Activated CD8-positive, alpha-beta memory T cell treated with anti-CD3 and anti-CD28 coated beads, Interleukin-2, amount 10 ng/mL, durations not matched to agents 7 days and 5 days (primary cell): ENCODE measurements at regions of chr10 and their contacts with region 1.

Region 1: DNA sequence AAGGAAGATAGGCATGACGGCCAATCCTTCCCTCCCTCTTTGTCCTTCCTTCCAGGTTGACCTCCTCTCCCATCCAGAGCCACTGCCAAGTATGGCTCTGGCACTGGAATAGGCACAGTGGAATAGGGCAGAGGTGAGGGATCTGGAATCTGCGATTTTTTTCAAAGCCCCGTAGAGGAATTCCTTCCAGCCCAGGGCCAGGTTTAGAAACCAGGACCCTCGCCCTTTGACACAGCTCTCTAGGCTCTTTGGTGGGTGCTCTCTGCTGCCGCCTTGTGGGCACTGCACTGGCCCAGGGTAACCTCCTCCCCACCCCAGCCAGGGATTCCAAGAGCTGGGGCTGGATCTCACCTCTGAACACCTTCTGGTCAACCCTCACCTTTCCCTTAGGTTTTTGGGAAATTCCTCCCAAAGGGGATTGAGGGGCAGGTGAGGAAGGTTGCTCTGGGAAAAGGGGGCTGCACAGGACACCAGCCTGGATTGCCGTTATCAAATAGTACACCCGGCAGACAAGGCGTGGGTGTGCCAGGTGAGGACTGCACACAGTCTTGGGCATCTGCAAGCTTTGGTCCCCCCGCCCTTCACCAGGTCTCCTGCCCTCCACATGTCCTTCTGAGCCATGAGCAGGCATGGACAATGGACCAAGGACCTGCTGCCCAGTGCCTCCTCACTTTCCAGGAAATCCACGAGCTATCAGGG is 22.8 kb downstream of the C10orf105 start:
- DNase-seq: peak; percentile 75
- ATAC-seq: peak; percentile 66
- H3K4me3 Mint-ChIP-seq: no peak overlapping the region
- H3K27ac Mint-ChIP-seq: no peak overlapping the region
- H3K4me1 Mint-ChIP-seq: peaks cover 51% of the 10 kb centered on the region
- H3K27me3 Mint-ChIP-seq: peaks cover 8% of the 10 kb centered on the region

Region 2: DNA sequence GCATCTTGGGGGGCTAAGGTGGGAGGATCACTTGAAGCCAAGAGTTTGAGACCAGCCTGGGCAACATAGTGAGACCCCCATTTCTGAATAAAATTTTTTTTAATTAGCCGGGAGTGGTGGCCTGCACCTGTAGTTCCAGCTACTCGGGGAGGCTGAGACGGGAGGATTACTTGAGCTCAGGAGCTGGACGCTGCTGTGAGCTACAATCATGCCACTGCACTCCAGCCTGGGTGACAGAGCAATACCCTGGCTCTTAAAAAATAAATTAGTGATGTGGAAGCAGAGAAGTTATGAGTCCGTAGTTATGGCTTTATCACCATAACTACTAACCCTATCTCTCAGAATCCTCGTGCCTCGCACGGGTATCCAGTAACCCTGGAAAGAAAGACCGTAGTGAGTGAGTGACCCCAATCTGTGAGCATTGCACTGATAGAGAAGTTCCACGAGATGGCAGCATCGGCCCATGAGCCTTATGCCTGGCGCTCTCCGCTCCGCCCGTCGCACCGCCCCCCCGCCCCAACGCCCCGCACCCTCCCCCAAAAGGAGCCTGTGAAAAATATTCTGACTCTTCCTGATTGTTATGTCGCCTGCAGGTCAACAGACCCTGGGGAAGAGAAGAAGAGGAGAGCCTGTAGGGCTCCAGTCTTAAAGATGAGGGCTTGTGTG is 382.6 kb before region 1 on chr10:
- CTCF ChIA-PET with region 1: interaction called, 35 read pairs
- DNase-seq: peak; percentile 59
- ATAC-seq: peak; percentile 37
- H3K4me3 Mint-ChIP-seq: no peak overlapping the region
- H3K27ac Mint-ChIP-seq: no peak overlapping the region
- H3K4me1 Mint-ChIP-seq: peaks cover 19% of the 10 kb centered on the region
- H3K27me3 Mint-ChIP-seq: peaks cover 18% of the 10 kb centered on the region

Region 3: DNA sequence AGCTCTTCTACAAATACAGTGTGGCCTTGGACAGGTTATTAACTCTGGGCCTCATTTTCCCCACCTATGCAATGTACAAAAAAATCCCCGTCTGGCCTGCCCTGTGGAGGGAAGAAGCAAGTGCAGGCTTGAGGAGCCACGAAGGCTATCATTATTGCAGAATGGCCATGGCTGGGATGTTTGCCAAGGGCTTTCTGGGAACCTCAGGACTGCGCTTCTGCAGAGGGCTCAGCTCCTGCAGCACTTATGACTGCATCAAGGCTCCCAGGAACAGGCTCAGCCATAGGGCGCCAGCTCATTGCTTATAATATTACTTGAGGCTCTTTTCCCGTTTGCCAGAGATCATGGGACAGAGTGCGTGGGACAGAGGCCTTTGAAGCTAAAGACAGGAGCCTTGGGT is 43.3 kb after region 1 on chr10:
- CTCF ChIA-PET with region 1: interaction called, 13 read pairs
- DNase-seq: no peak
- ATAC-seq: no peak
- H3K4me3 Mint-ChIP-seq: no peak overlapping the region
- H3K27ac Mint-ChIP-seq: peak overlapping the region; percentile 4
- H3K4me1 Mint-ChIP-seq: peaks cover 79% of the 10 kb centered on the region
- H3K27me3 Mint-ChIP-seq: no peaks in the 10 kb centered on the region

Region 4: DNA sequence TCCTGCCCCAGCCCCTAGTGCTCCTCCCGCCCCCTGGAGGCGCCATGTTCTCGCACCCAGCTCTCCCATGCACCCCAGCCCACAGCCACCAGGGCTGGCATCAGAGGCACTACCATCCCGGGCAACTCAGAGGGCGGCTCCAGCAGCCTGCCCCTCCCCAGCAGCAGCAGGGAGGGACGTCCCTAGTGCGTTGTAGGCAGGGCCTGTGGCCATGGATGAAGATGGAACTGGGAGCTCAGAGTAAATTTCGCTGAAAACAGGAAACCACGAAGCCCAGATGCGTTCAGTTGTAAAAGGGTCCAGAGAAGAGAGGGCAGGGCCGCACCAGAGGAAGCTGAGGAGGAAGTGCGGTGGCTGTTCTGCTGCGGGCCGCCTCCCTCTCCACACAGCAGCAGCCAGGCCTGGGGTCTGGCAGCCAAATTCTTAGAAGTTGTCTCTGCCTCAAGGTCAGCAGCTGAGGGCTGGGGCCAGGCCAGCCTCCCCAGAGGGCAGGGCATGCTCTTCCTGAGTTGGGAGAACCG is 52.0 kb after region 1 on chr10:
- CTCF ChIA-PET with region 1: interaction called, 40 read pairs
- DNase-seq: peak; percentile 95
- ATAC-seq: peak; percentile 85
- H3K4me3 Mint-ChIP-seq: peak overlapping the region; percentile 56
- H3K27ac Mint-ChIP-seq: peak overlapping the region; percentile 97
- H3K4me1 Mint-ChIP-seq: peaks cover 94% of the 10 kb centered on the region
- H3K27me3 Mint-ChIP-seq: no peaks in the 10 kb centered on the region

Region 5: GRCh38 chr10:71756311-71757191 is 59.8 kb after region 1 on chr10:
- CTCF ChIA-PET with region 1: interaction called, 13 read pairs
- DNase-seq: no peak
- ATAC-seq: peak; percentile 52
- H3K4me3 Mint-ChIP-seq: peak overlapping the region; percentile 55
- H3K27ac Mint-ChIP-seq: peak overlapping the region; percentile 88
- H3K4me1 Mint-ChIP-seq: peaks cover 69% of the 10 kb centered on the region
- H3K27me3 Mint-ChIP-seq: no peaks in the 10 kb centered on the region

Region 6: GRCh38 chr10:71766702-71767419 is 70.1 kb after region 1 on chr10:
- CTCF ChIA-PET with region 1: interaction called, 149 read pairs
- DNase-seq: peak; percentile 70
- ATAC-seq: no peak
- H3K4me3 Mint-ChIP-seq: no peak overlapping the region
- H3K27ac Mint-ChIP-seq: peak overlapping the region; percentile 90
- H3K4me1 Mint-ChIP-seq: peaks cover 61% of the 10 kb centered on the region
- H3K27me3 Mint-ChIP-seq: no peaks in the 10 kb centered on the region

Region 7: DNA sequence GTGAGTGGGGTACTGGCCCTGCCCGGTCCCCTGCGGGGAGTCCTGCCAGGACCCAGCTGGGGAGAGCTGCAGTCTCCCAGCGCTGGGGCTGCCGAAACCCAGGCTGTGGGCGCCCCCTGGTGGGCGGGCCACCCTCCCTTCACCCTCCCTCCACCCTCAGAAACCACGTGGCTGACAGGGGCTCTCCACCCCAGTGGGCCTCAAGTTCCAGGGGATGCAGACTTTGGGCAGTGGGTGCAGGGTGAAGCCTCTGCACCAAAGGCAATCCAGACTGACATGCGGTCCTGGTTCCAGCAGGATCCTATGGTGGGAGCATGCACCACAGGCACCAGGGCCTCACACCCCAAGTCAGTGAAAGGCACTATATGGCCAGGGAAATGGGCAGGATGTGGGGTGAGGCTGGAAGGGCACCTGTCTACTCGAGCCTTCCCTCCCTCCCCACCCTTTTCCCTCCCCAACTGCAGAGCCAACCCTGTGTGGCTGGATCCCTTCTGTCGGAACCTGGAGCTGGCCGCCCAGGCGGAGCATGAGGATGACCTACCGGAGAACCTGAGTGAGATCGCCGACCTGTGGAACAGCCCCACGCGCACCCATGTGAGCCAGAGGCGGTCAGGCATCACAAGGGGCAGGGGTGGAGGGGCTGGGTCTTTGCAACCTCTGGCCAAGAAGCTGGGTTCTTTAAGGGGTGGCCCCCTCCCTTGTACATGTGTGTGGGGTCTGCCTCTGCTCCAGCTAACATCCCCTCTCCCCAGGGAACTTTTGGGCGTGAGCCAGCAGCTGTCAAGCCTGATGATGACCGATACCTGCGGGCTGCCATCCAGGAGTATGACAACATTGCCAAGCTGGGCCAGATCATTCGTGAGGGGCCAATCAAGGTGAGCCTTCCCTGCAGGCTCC is 115.5 kb after region 1 on chr10:
- CTCF ChIA-PET with region 1: interaction called, 16 read pairs
- DNase-seq: peak; percentile 82
- ATAC-seq: peak; percentile 96
- H3K4me3 Mint-ChIP-seq: no peak overlapping the region
- H3K27ac Mint-ChIP-seq: no peak overlapping the region
- H3K4me1 Mint-ChIP-seq: peaks cover 5% of the 10 kb centered on the region
- H3K27me3 Mint-ChIP-seq: no peaks in the 10 kb centered on the region

Region 8: DNA sequence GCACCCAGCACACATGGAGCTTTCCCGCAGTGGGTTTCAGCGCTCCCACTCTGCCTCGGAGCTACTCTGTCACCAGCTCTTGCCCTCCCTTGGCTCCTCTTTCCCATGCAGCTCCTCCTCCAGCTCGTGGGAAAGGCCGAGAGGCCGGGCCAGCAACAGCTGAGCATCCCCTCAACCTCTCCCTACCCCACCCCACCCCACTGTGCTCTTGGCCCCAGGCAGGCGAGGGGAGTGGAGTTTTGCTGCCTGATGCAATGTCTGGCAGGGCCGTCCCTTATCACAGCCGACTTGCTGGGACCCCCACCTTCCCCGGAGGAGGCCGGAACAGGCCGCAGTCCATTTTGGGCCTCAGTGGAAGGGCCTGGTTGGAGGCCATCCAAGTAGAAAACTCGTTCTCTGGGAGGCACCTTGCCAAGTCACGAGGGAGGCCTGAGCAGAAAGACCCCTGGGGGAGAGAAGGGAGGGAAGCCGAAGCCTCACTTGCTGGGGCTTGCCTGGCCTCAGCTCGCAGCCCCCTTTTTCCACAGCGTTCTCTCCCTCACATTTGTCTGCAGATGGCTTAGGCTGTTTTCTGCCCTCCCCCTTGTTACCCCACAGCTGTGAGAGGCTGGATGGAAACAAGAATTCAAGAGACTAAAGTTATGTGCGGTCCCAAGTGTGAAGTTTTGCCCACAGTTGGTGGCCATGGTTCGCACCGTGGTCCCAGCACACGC is 302.7 kb after region 1 on chr10:
- CTCF ChIA-PET with region 1: no interaction called
- DNase-seq: no peak
- ATAC-seq: no peak
- H3K4me3 Mint-ChIP-seq: no peak overlapping the region
- H3K27ac Mint-ChIP-seq: no peak overlapping the region
- H3K4me1 Mint-ChIP-seq: no peaks in the 10 kb centered on the region
- H3K27me3 Mint-ChIP-seq: peaks cover 10% of the 10 kb centered on the region